MCF 10A (cell line): ENCODE measurements at regions of chr12 and their contacts with region 1.

Region 1: DNA sequence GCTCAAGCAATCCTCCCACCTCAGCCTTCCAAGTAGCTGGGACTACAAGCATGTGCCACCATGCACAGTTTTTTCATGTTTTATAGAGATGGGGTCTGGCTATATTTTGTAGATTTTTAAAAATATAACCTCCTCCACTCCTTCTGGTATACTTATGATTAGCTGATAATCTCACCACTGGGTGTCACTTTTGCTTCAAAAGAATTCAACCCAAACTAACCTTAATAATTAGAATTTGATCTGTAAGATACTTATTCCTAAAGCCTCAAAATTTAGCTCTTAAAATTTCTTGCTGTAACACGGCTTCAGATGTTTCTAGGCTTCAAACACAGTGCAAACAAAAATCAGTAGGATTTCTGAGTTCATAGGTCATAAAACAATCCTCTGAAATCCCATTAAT is 130.3 kb downstream of the CEP83 start:
- DNase-seq: peak; percentile 2
- H3K4me3 Mint-ChIP-seq: no peak overlapping the region
- H3K27ac Mint-ChIP-seq: no peak overlapping the region
- H3K4me1 Mint-ChIP-seq: peaks cover 13% of the 10 kb centered on the region
- H3K27me3 Mint-ChIP-seq: no peaks in the 10 kb centered on the region
- CTCF ChIP-seq: peak; percentile 20

Region 2: DNA sequence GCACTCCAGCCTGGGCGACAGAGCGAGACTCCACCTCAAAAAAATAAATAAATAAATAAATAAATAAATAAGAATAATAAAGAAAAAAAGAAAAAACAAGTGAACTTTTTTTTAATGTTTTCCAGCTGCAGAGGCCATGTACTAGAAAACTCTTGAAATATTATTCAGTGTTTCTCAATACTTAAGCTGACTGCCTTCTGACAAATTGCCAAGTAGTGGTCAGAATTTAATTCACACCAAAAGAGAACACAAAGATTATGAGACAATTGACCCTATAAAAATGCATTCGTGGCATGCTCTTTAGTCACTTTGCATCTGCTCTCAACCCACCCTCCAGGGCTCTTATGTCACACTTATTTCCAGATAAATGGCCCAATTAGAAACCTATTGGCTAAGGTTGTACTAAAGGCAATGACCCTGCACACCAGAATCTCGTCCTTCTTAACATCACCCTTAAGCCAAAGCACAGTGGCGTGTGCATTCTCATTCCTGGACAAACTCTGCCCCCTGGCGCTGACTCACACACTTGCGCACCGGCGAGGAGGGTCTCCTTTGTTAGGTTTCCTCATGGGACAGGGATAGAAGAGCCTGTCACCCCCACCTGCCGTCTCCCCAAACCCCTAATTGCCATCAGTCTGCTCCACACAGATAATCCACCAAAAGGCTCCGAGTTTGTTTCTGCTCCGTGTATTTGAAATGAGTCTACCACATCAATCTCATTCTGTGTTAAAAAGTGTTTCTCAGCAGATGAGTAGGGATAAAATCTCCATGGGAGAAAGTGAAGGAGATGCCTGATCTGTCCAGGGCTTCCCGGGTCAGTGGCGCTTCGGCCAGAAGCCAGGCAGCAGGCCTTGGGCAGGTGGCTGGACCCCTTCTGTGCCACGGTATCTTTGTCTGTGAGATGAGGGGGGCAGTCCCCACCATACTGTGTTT is 203.4 kb after region 1 on chr12:
- CTCF ChIA-PET with region 1: interaction called, 5 read pairs
- POLR2A ChIA-PET with region 1: no interaction called
- intact Hi-C with region 1: loop called (anchors 1 kb)
- DNase-seq: peak; percentile 80
- H3K4me3 Mint-ChIP-seq: no peak overlapping the region
- H3K27ac Mint-ChIP-seq: no peak overlapping the region
- H3K4me1 Mint-ChIP-seq: peaks cover 10% of the 10 kb centered on the region
- H3K27me3 Mint-ChIP-seq: no peaks in the 10 kb centered on the region
- CTCF ChIP-seq: peak; percentile 87